ENCODE measurements at regions of chr1 and their contacts with region 1.

Region 1: GRCh38 chr1:180168786-180169639 is 14.3 kb downstream of the QSOX1 start:
- DNase-seq: peak; percentile 50
- H3K4me3 ChIP-seq: no peak overlapping the region
- H3K27ac ChIP-seq: no peak overlapping the region
- H3K4me1 ChIP-seq: no peaks in the 10 kb centered on the region
- H3K27me3 ChIP-seq: no peaks in the 10 kb centered on the region
- CTCF ChIP-seq: peak in 2 of 4 experiments; percentile 30 to 53
- POLR2A ChIP-seq: no peak

Region 2: GRCh38 chr1:180070286-180070685 is 98.7 kb before region 1 on chr1:
- intact Hi-C with region 1: no loop called
- DNase-seq: no peak
- H3K4me3 ChIP-seq: no peak overlapping the region
- H3K27ac ChIP-seq: no peak overlapping the region
- H3K4me1 ChIP-seq: no peaks in the 10 kb centered on the region
- H3K27me3 ChIP-seq: no peaks in the 10 kb centered on the region
- CTCF ChIP-seq: no peak
- POLR2A ChIP-seq: no peak

Region 3: GRCh38 chr1:180112984-180113647 is 55.9 kb before region 1 on chr1:
- intact Hi-C with region 1: loop called (anchors 5 kb)
- DNase-seq: no peak
- H3K4me3 ChIP-seq: no peak overlapping the region
- H3K27ac ChIP-seq: no peak overlapping the region
- H3K4me1 ChIP-seq: no peaks in the 10 kb centered on the region
- H3K27me3 ChIP-seq: no peaks in the 10 kb centered on the region
- CTCF ChIP-seq: no peak
- POLR2A ChIP-seq: no peak

Measured in prostate gland (tissue), 2 donors.